ENCODE measurements at regions of chr10 and their contacts with region 1.

Region 1: GRCh38 chr10:85618841-85619240 is 747.8 kb downstream of the GRID1 start:
- DNase-seq: no peak
- H3K4me3 Mint-ChIP-seq: no peak overlapping the region
- H3K27ac Mint-ChIP-seq: no peak overlapping the region
- H3K4me1 Mint-ChIP-seq: peaks cover 11% of the 10 kb centered on the region
- H3K27me3 Mint-ChIP-seq: no peaks in the 10 kb centered on the region

Region 2: DNA sequence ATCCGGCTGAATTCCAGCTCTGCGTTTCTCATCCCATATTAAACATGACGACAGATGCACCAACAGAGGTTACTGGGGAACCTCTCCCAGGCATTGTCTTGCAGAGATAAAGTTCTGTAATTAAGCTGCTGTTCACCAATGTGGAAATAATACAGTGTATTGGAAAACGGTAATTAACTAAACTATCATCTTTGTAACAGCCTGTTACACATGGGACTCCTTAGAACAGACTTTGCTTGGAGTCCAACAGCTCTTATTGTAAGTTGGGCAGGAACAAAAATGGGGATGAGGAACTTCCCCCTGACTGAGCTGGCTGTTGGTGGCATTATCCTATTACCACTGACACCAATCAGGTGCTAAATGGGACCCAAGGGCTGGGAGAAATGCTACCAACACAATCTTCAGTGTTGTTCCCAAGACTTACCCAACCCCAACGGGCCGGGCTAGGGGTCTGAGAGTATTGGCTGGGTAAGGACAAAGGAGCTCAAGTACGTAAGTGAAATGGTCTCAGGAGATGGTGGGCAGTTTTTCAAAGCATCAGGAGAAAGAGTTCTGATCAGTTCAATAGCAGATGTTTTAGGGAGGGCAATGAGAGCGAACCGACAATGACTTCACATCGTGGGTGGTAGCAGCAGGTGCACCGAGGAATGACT is 11.7 kb before region 1 on chr10:
- CTCF ChIA-PET with region 1: interaction called, 3 read pairs
- POLR2A ChIA-PET with region 1: no interaction called
- intact Hi-C with region 1: loop called (anchors 1 kb)
- DNase-seq: no peak
- H3K4me3 Mint-ChIP-seq: no peak overlapping the region
- H3K27ac Mint-ChIP-seq: no peak overlapping the region
- H3K4me1 Mint-ChIP-seq: peaks cover 26% of the 10 kb centered on the region
- H3K27me3 Mint-ChIP-seq: no peaks in the 10 kb centered on the region

Measured in activated CD4-positive, alpha-beta memory T cell treated with anti-CD3 and anti-CD28 coated beads for 36 hours (primary cell).